Gastrocnemius medialis (tissue), 4 donors: ENCODE measurements at regions of chr16 and their contacts with region 1.

Region 1: GRCh38 chr16:425082-425718 is at the start of gene RAB11FIP3:
- DNase-seq: peak; percentile 80 to 81
- ATAC-seq: peak; percentile 59 to 71
- H3K4me3 ChIP-seq: peak within 1 kb of the TSS; percentile 69 to 76 (median 72)
- H3K27ac ChIP-seq: peak within 1 kb of the TSS; percentile 93 to 100 (median 99)
- H3K4me1 ChIP-seq: peaks cover 46 to 50% of the 10 kb centered on the region in 2 donors
- H3K27me3 ChIP-seq: no peaks in the 10 kb centered on the region
- CTCF ChIP-seq: peak in 2 of 5 experiments; percentile 28 to 29
- POLR2A ChIP-seq: peak; percentile 98 to 99
- total RNA-seq, gene RAB11FIP3: 27.0 to 50.1 (median 34.8) TPM

Region 2: DNA sequence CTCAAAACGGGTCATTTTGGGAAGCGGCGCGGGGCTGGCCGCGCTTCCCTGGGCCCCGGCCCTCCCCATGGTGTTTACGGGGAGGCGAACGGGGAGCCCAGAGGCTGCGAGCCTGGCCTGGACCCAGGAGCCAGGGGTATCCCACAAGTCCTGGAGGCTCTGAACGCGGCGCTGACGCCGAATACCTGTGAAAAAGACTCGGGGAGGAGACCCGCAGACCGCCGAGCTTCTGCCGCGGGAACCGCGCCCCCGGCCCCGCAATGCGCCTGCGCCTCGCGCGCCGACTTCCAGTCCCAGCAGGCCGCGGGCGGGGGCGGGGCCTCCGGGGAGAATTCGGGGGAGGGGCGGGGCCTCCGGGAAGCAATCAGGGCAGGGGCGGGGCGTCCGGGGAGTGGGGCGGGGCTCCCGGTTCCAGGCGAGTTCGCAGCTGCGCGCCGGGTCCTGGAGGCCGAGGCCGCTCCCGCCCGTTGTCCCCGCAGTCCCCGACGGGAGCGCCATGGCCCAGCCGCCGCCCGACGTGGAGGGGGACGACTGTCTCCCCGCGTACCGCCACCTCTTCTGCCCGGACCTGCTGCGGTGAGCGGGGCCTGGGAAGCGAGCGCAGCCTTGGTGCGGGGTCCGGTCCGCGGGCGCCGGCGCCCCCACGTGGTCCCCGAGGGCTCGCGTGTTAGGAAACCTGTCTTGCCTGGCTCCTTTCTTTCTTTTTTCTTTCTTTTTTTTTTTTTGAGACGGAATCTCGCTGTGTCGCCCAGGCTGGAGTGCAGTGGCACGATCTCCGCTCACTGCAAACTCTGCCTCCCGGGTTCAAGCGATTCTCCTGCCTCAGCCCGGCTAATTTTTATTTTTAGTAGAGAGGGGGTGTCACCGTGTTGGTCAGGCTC is 23.5 kb before region 1 on chr16 and contains the start of gene DECR2:
- in situ Hi-C with region 1: no loop called
- intact Hi-C with region 1: loop called (anchors 1 kb)
- DNase-seq: peak; percentile 93
- ATAC-seq: peak; percentile 83 to 84
- H3K4me3 ChIP-seq: peak within 1 kb of the TSS; percentile 85 to 98 (median 91)
- H3K27ac ChIP-seq: peak within 1 kb of the TSS; percentile 88 to 98 (median 96)
- H3K4me1 ChIP-seq: peaks cover 16 to 18% of the 10 kb centered on the region in 2 donors
- H3K27me3 ChIP-seq: no peaks in the 10 kb centered on the region
- CTCF ChIP-seq: peak in 4 of 5 experiments; percentile 45 to 55 (median 50)
- POLR2A ChIP-seq: peak; percentile 89 to 93
- total RNA-seq, gene DECR2: 17.0 to 23.3 (median 18.8) TPM

Region 3: GRCh38 chr16:483341-484075 is 58.3 kb after region 1 on chr16:
- in situ Hi-C with region 1: no loop called
- intact Hi-C with region 1: no loop called
- DNase-seq: no peak
- ATAC-seq: no peak
- H3K4me3 ChIP-seq: no peak overlapping the region
- H3K27ac ChIP-seq: no peak overlapping the region
- H3K4me1 ChIP-seq: no peaks in the 10 kb centered on the region
- H3K27me3 ChIP-seq: no peaks in the 10 kb centered on the region
- CTCF ChIP-seq: no peak
- POLR2A ChIP-seq: no peak

Region 4: DNA sequence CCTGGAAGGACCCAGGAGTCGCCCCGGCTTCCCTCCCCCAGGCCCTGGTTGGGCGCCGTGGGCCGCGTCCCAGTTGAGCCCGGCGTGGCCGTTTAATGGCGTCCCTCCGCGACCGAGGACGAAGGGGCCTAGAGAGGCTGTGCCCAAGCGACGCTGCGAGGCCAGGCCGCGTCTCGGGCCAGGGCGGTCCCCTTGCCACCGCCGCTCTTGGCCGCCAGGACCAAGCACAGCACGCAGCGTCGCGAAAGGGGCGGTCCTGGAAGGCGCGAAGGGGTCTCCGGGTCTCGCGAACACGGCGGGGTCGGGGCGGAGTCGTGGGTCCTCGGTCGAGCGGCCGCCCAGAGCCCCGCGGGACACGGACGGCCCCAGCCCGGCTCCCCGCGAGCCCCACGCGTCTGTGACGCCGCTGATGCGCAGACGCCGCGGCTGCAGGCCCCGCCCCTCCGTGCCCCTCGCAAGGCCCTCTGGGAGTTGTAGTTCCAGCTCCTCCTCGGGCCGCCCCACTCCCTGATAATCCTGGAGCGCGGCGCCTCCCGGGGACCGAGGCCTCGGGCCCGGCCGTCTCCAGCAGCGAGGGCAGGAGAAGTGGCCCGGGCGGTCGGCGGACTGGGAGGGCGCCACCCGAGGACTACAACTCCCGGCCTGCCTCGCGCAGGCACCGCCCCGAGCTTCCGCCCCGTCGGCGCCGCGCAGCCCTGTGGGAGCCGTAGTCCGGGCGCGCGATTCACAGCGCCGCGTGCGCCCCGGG is 102.0 kb after region 1 on chr16 and contains the start of gene CAPN15:
- in situ Hi-C with region 1: no loop called
- intact Hi-C with region 1: loop called (anchors 2 kb)
- DNase-seq: peak; percentile 70 to 83
- ATAC-seq: peak; percentile 82 to 83
- H3K4me3 ChIP-seq: peak within 1 kb of the TSS; percentile 77 to 87 (median 83)
- H3K27ac ChIP-seq: peak within 1 kb of the TSS; percentile 94 to 100 (median 98)
- H3K4me1 ChIP-seq: peaks cover 31 to 42% of the 10 kb centered on the region in 2 donors
- H3K27me3 ChIP-seq: no peaks in the 10 kb centered on the region
- CTCF ChIP-seq: peak; percentile 26 to 57 (median 40)
- POLR2A ChIP-seq: peak; percentile 93
- total RNA-seq, gene CAPN15: 22.3 to 37.8 (median 27.4) TPM

Region 5: DNA sequence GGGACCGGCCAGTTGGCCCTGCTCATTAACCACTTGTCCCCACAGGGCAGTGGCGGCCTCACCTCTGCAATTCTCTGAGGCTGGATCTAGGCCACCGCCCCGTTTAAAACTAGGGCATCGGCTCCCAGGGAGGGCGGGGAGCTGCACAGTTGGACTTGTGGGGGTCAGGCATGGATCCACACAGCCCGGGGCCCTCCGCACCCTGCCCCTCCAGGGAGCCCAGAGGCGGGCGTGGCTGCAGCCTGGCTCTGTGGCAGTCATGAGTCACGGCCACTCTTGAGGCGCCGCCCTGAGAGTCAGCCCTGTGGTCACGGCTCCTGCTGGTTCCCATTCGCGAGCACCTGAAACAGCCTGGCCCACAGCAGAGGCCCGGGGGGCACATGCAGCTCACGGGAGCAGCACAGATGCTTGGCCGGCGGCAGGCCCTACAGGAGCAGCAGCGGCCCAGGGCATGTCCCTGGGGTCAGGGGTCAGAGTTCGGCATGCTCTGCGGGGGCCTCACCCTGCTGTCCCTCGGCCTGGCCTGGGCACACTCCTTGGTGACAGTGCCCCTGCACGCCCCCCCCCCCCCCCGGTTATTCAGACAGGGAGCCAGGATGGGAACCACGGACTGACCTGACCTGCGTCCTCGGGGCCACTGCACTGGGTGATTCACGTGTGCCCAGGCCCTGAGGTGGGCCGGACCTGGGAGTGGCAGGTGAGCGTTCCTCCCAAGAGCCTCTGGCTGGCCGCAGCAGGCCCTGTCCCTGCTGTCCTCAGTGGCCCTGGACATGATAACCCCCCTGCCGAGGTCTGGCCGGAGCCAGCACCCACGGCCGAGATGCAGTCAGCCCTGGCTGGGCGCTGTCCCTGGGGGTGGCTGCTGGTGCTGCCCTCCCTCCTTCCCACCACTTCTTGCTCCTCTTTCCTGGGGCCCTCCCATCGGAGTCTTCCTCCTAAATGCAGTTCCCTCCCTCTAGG is 110.5 kb after region 1 on chr16:
- in situ Hi-C with region 1: no loop called
- intact Hi-C with region 1: loop called (anchors 2 kb)
- DNase-seq: peak; percentile 85 to 89
- ATAC-seq: peak; percentile 74 to 77
- H3K4me3 ChIP-seq: peak overlapping the region; percentile 17 to 31 (median 28)
- H3K27ac ChIP-seq: peak overlapping the region; percentile 82 to 94 (median 92)
- H3K4me1 ChIP-seq: peaks cover 38 to 40% of the 10 kb centered on the region in 2 donors
- H3K27me3 ChIP-seq: no peaks in the 10 kb centered on the region
- CTCF ChIP-seq: peak in 2 of 5 experiments; percentile 5 to 28
- POLR2A ChIP-seq: peak; percentile 53 to 63

Region 6: DNA sequence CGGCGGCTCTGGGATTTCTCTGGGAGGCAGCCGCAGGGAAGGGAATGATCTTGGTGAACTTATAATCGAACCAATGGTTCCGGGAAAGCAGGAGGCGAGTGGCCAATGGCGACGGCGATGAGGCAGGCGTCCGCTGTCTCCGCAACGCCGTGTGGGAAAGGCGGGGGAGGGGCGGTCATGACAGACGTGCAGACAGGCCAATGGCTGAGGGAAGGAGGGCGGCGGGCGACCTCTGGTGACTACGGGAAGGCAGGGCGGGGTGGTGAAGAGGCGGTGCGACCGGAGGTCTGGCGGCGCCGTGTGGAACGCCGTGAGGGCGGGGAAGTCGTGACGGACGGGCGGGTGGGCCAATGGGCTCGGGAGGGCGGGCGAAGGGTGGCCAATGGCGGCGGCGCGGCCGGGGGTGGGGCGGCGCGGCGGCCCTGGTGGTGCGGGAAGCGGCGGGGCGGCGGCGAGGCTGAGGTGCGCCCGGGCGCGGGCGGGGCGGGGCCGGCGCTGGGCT is 164.5 kb after region 1 on chr16 and contains the start of gene RAB40C:
- in situ Hi-C with region 1: no loop called
- intact Hi-C with region 1: loop called (anchors 1 kb)
- DNase-seq: peak; percentile 99
- ATAC-seq: peak; percentile 60 to 72
- H3K4me3 ChIP-seq: peak within 1 kb of the TSS; percentile 89 to 94 (median 90)
- H3K27ac ChIP-seq: peak within 1 kb of the TSS; percentile 96 to 99 (median 98)
- H3K4me1 ChIP-seq: peaks cover 61 to 66% of the 10 kb centered on the region in 2 donors
- H3K27me3 ChIP-seq: no peaks in the 10 kb centered on the region
- CTCF ChIP-seq: no peak
- POLR2A ChIP-seq: no peak
- total RNA-seq, gene RAB40C: 15.6 to 29.3 (median 21.4) TPM